ENCODE measurements at regions of chr6 and their contacts with region 1.

Region 1: DNA sequence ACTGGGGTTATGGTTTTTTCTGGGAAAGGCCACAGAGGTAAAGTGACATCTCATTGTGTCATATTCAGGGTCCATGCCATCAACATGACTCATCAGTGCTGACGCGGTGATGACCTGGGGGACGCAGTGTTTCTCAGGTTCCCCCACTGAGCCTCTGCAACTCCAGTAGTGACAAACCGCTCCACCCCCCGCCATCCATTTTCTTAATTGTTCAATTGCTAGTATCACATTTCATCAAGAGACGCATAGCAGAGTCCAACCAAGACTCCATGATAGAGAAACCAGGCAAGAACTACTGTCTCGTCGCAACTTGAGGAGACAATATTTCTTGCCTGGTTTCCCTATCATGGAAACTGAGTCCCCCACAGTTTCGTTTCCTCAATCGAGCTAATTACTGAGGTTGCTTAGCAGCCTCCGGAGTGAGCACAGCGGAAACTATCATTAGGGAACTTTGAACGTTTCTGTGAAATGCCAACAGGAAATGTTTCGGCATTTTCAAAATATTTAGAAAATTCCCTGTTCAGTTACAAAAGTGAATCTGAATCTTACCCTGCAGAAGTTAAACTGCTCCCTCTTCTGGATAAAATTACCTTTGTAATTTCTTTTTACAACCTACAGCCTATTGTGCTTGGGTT is 12.2 kb upstream of the SERPINB1 start:
- DNase-seq: peak in 7 of 10 donors; percentile 34 to 50 (median 39)
- ATAC-seq: peak; percentile 6 to 13
- H3K4me3 Mint-ChIP-seq: peak overlapping the region; percentile 55 to 86 (median 77)
- H3K27ac Mint-ChIP-seq: peak overlapping the region; percentile 85 to 100 (median 94)
- H3K4me1 Mint-ChIP-seq: peaks cover 37 to 74% (median 69%) of the 10 kb centered on the region in 4 donors
- H3K27me3 Mint-ChIP-seq: peaks cover 0 to 2% (median 0%) of the 10 kb centered on the region in 5 donors

Region 2: GRCh38 chr6:2870056-2870674 is 16.3 kb after region 1 on chr6:
- POLR2A ChIA-PET with region 1: interaction called, 11 read pairs
- DNase-seq: no peak
- ATAC-seq: no peak
- H3K4me3 Mint-ChIP-seq: no peak overlapping the region
- H3K27ac Mint-ChIP-seq: peak overlapping the region in 1 of 10 donors; percentile 56
- H3K4me1 Mint-ChIP-seq: peaks cover 12 to 74% (median 43%) of the 10 kb centered on the region in 4 donors
- H3K27me3 Mint-ChIP-seq: no peaks in the 10 kb centered on the region

Region 3: GRCh38 chr6:2900821-2901644 is 47.2 kb after region 1 on chr6:
- POLR2A ChIA-PET with region 1: interaction called, 39 read pairs
- DNase-seq: peak in 1 of 10 donors; percentile 12
- ATAC-seq: no peak
- H3K4me3 Mint-ChIP-seq: peak overlapping the region; percentile 97 to 100 (median 100)
- H3K27ac Mint-ChIP-seq: peak overlapping the region; percentile 91 to 98 (median 98)
- H3K4me1 Mint-ChIP-seq: peaks cover 40 to 71% (median 62%) of the 10 kb centered on the region in 4 donors
- H3K27me3 Mint-ChIP-seq: no peaks in the 10 kb centered on the region